ENCODE measurements at regions of chr17 and their contacts with region 1.

Region 1: GRCh38 chr17:38577244-38577643 is 28.5 kb downstream of the SRCIN1 start:
- DNase-seq: no peak
- H3K4me3 ChIP-seq: no peak overlapping the region
- H3K27me3 ChIP-seq: peaks cover 64% of the 10 kb centered on the region
- CTCF ChIP-seq: no peak

Region 2: DNA sequence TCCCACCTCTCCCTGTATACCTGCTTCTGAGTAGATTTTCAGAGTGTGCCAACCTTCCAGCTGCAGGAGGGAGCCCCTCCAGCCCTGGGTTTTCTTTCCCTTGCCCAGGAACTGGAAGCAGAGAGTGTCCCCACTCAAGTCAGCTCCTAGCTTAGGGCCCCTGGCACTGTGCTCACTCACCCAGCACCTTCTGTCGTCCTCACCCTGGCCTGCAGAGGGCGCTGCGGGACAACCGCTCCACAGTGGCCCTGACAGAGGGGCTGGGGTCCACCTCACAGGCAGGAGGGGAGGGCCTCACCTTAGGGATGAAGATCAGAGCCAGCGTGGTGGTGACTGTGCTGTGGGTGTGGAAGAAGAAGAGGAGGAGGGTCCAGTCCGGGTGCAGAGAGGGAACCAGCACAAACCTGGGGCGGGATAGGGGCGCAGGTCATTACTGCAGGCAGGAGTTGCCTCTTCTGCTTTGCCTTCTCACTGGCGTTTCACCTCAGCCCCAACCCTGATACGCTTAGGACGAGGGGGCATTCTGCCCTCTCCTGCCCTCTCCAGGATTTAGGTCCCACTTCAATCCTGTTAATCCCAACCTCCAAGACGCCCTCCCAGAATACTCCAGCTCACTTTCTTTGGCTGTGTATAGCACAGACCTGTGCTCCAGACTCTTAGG is 243.5 kb before region 1 on chr17:
- CTCF ChIA-PET with region 1: no interaction called
- POLR2A ChIA-PET with region 1: no interaction called
- DNase-seq: no peak
- H3K4me3 ChIP-seq: no peak overlapping the region
- H3K27me3 ChIP-seq: peaks cover 19% of the 10 kb centered on the region
- CTCF ChIP-seq: peak; percentile 71

Region 3: GRCh38 chr17:38403491-38403890 is 173.8 kb before region 1 on chr17:
- CTCF ChIA-PET with region 1: no interaction called
- POLR2A ChIA-PET with region 1: no interaction called
- DNase-seq: no peak
- H3K4me3 ChIP-seq: no peak overlapping the region
- H3K27me3 ChIP-seq: no peaks in the 10 kb centered on the region
- CTCF ChIP-seq: no peak

Region 4: DNA sequence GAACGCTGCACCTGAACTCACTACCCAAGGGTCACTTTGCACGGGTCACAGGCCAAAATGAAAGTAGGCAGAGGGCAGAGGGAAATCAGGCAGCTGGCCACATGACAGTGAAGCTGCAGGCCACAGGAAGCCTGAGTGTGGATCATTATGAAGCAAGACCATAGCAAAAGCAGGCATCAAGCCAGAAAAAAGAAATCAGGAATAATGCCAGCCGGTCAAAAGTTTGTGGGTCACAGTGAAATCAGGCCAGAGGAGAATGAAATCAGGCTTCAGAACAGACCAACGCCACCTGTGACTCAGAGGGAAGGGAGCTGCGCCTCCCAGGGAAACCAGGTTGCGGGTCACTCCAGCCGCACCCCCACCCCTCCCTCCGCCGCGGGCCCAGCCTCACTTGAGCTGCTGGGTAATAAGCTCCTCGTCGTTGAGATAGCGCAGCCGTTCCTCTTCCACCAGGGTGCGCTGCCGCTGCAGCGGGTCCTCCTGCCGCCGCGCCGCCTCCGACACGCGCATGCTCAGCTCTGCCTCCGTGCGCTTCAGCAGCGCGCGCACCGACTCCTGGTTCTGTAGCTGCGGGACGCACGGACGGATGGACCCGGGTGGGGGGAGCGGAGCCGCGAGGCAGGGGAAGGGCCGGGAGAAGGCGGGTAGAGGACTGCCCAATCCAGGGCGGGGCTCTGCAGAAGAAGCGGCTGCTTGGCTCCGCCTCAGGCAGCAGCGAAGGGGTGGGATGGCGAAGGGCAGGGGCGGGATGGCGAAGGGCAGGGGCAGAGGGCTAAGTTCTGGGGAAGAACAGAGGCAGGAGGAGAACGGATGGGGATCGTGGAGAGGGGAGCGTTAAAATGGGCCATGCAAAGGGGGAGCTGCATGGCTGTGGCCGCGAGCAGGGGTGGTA is 19.2 kb before region 1 on chr17:
- CTCF ChIA-PET with region 1: interaction called, 110 read pairs
- POLR2A ChIA-PET with region 1: no interaction called
- DNase-seq: peak; percentile 53
- H3K4me3 ChIP-seq: peak overlapping the region; percentile 35
- H3K27me3 ChIP-seq: peaks cover 4% of the 10 kb centered on the region
- CTCF ChIP-seq: peak; percentile 98

Measured in BJ (cell line).